Motor neuron (in vitro differentiated cells): ENCODE measurements at regions of chr10 and their contacts with region 1.

Region 1: DNA sequence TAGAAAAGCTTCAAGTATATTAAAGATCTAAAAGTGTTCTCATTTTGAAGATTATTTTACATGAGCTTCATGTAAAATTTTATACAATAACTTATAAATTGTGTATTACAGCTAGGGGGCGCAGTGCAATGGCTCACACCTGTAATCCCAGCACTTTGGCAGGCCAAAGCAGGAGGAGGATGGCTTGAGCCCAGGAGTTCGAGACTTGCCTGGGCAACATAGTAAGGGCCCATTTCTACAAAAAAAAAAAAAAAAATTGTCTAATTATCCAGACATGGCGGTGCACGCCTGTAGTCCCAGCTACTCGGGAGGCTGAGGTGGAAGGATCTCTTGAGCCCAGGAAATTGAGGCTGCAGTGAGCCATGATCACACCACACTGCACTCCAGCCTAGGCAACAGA is 16.6 kb downstream of the ACBD5 start:
- ATAC-seq: peak in 3 of 8 experiments; percentile 30 to 38 (median 34)
- H3K4me3 ChIP-seq: no peak overlapping the region
- H3K27ac ChIP-seq: no peak overlapping the region
- H3K4me1 ChIP-seq: no peaks in the 10 kb centered on the region

Region 2: GRCh38 chr10:26621889-26622711 is 601.9 kb before region 1 on chr10:
- in situ Hi-C with region 1: no loop called
- ATAC-seq: peak; percentile 61 to 96 (median 82)
- H3K4me3 ChIP-seq: peak overlapping the region; percentile 6 to 30 (median 14)
- H3K27ac ChIP-seq: no peak overlapping the region
- H3K4me1 ChIP-seq: no peaks in the 10 kb centered on the region

Region 3: GRCh38 chr10:27099916-27100812 is 123.8 kb before region 1 on chr10 and contains the start of gene ANKRD26:
- in situ Hi-C with region 1: loop called in 1 of 9 experiments (anchors 25 kb)
- ATAC-seq: peak; percentile 67 to 89 (median 86)
- H3K4me3 ChIP-seq: peak within 1 kb of the TSS; percentile 57 to 82 (median 67)
- H3K27ac ChIP-seq: peak within 1 kb of the TSS; percentile 76 to 89
- H3K4me1 ChIP-seq: peaks cover 0 to 7% of the 10 kb centered on the region in 2 donors
- total RNA-seq, gene ANKRD26: 9.0 to 30.8 (median 12.2) TPM

Region 4: GRCh38 chr10:27158421-27158820 is 65.5 kb before region 1 on chr10:
- in situ Hi-C with region 1: no loop called
- ATAC-seq: no peak
- H3K4me3 ChIP-seq: no peak overlapping the region
- H3K27ac ChIP-seq: no peak overlapping the region
- H3K4me1 ChIP-seq: peaks cover 0 to 10% of the 10 kb centered on the region in 2 donors